ENCODE measurements at regions of chr6 and their contacts with region 1.

Region 1: GRCh38 chr6:159654483-159655098 is 38.5 kb downstream of the SOD2 start:
- DNase-seq: no peak
- H3K4me3 ChIP-seq: no peak overlapping the region
- H3K27ac ChIP-seq: no peak overlapping the region
- H3K4me1 ChIP-seq: peaks cover 0 to 3% (median under 1%) of the 10 kb centered on the region in 4 experiments; a peak in 2 of 7 replicates
- H3K27me3 ChIP-seq: no peaks in the 10 kb centered on the region
- CTCF ChIP-seq: peak in 2 of 3 experiments; percentile 37 to 40; a peak in 2 of 4 replicates
- EP300 ChIP-seq: no peak
- POLR2A ChIP-seq: no peak
- RAD21 ChIP-seq: peak; percentile 63 to 70

Region 2: DNA sequence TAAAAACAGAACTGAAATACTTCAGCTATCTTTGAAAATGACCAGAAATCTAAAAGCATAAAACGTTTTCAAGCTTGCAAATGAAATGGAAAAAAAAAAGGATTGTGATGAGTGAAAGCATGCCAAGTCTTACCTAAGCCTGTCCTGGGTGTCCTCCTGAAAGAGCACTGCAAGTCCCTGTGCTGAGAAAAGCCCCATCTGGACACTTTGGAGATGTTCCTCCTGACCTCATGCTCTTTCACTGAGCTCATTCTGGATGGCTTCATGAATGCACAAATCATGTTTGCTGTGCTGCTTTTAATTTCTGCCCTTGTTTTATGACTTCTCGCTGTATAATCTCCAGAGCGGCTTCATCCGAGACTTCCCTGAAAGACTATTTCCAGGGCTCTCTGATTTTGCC is 97.6 kb before region 1 on chr6:
- CTCF ChIA-PET with region 1: no interaction called
- POLR2A ChIA-PET with region 1: no interaction called
- DNase-seq: peak in 1 of 2 experiments; percentile 14
- H3K4me3 ChIP-seq: no peak overlapping the region
- H3K27ac ChIP-seq: no peak overlapping the region
- H3K4me1 ChIP-seq: no peaks in the 10 kb centered on the region
- H3K27me3 ChIP-seq: peaks cover 0 to 2% (median 0%) of the 10 kb centered on the region in 4 experiments; a peak in 1 of 7 replicates
- CTCF ChIP-seq: no peak
- EP300 ChIP-seq: no peak
- POLR2A ChIP-seq: no peak
- RAD21 ChIP-seq: no peak

Region 3: DNA sequence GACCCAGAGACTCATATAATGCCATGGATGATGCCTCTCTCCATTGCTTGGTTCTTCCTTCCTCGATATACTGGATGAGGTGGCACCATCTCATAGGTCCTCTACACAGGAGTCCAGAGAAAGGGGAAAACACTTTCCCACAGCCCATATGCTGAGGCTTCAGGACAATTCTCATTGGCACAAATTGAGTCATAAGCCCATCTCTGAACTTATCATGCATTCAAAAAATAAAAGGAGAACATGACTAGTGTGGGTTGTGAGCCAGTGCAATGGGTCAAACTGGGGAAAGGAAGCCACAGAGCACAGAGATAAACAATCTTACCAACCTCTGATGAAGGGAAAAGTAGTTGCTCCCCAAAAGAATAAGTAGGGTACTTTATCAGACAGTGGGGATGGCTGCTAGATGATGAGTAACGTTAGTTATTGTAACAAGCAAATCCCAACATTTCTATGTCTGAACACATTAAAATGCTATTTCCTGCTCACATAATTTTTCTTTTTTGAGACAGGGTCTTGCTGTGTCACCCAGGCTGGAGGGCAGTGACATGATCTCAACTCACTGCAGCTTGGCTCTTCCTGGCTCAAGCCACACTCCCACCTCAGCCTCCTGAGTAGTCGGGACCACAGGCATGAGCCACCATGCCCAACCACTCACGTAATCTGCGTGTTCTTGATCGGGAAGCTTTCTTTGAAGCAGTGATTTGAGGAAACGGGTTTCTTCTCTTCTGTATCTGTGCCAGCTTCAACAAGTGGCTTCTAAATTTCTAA is 11.5 kb after region 1 on chr6:
- CTCF ChIA-PET with region 1: interaction called, 10 read pairs
- POLR2A ChIA-PET with region 1: no interaction called
- DNase-seq: no peak
- H3K4me3 ChIP-seq: no peak overlapping the region
- H3K27ac ChIP-seq: no peak overlapping the region
- H3K4me1 ChIP-seq: no peaks in the 10 kb centered on the region
- H3K27me3 ChIP-seq: no peaks in the 10 kb centered on the region
- CTCF ChIP-seq: no peak
- EP300 ChIP-seq: no peak
- POLR2A ChIP-seq: no peak
- RAD21 ChIP-seq: no peak

Measured in H1 (cell line).